Naive thymus-derived CD4-positive, alpha-beta T cell (primary cell): ENCODE measurements at regions of chr14 and their contacts with region 1.

Region 1: DNA sequence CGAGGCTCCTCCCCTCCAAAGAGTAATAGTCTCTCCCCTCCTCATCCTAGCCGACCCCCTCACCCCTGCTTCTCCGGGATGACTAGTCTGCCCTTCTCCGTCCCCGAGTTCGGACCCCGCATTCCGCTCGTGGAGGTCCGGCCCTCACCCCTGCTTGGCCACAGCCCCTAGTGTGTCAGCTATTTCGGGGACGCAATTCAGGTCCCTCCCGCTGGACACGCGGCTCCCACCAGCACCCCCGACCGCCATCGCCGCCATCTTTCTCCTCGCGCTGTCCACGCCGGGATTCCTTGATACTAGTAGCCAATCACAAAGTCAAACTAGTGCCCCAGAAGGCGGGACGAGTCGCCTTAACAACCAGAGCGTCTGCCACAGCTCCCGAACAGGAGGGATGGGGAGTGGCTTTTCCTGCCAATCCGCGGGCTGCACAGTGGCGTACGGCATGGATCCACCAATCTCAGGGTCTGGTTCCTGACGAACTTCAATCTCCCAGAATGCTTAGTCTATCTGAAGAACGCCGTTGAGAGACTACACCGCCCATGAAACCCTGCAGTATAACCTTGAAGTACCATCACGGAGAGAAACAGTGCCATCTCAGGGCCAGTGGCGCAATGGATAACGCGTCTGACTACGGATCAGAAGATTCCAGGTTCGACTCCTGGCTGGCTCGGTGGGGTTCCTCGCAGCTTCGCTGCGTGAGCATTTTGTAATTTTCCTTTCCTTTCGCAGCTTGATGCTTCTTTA is at the start of gene PRMT5:
- DNase-seq: peak; percentile 81 to 100 (median 99)
- ATAC-seq: peak; percentile 97
- H3K4me3 ChIP-seq: peak within 1 kb of the TSS; percentile 91
- H3K4me3 Mint-ChIP-seq: no peak within 1 kb of the TSS
- H3K27ac ChIP-seq: peak within 1 kb of the TSS; percentile 91
- H3K27ac Mint-ChIP-seq: no peak within 1 kb of the TSS
- H3K4me1 ChIP-seq: peaks cover 9 to 17% of the 10 kb centered on the region in 2 donors
- H3K4me1 Mint-ChIP-seq: peaks cover 5 to 36% (median 20%) of the 10 kb centered on the region in 7 donors
- H3K27me3 ChIP-seq: no peaks in the 10 kb centered on the region
- H3K27me3 Mint-ChIP-seq: no peaks in the 10 kb centered on the region
- total RNA-seq, gene PRMT5: 24.9 to 82.8 (median 34.2) TPM

Region 2: DNA sequence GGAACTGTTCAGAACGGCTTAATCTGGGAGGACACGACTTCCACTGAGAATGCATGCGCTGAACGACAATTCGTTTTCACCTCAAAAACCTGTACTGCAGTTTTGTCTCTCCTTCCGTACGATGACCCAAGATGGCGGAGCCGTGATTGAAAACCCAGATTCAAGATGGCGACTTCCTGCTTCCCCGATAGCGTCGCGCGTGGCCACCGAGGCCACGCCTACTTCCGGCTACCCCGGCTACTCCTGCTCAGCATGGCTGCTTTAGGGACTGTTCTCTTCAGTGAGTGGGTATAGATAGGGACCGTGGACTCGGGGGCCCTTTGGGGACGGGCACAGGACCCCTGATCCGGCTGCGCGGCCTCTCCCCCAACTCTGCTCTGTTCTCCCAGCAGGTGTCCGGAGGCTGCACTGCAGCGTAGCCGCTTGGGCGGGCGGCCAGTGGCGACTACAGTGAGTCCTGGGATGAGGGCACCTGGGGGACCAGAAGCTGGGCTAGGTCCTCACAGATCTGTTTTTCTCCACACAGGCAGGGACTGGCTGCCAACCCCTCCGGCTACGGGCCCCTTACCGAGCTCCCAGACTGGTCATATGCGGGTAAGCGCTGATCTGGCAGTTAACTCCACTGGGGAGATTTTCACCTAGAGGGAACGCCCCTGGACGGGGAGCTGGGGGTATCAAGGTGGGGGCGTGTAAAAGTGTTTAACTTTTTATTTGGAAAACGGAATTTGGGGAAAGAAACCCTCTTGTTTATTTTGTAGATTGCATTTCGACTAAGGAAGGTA is 99.4 kb before region 1 on chr14 and contains the start of gene MRPL52:
- CTCF ChIA-PET with region 1: no interaction called
- POLR2A ChIA-PET with region 1: interaction called, 5 read pairs
- intact Hi-C with region 1: loop called (anchors 1 kb)
- DNase-seq: peak; percentile 71 to 90 (median 88)
- ATAC-seq: peak; percentile 97
- H3K4me3 ChIP-seq: peak within 1 kb of the TSS; percentile 99
- H3K4me3 Mint-ChIP-seq: peak within 1 kb of the TSS; percentile 74 to 94 (median 91)
- H3K27ac ChIP-seq: peak within 1 kb of the TSS; percentile 95
- H3K27ac Mint-ChIP-seq: peak within 1 kb of the TSS; percentile 91 to 99 (median 97)
- H3K4me1 ChIP-seq: peaks cover 11 to 21% of the 10 kb centered on the region in 2 donors
- H3K4me1 Mint-ChIP-seq: peaks cover 11 to 39% (median 32%) of the 10 kb centered on the region in 7 donors
- H3K27me3 ChIP-seq: no peaks in the 10 kb centered on the region
- H3K27me3 Mint-ChIP-seq: peaks cover 0 to 2% (median 0%) of the 10 kb centered on the region in 5 donors
- total RNA-seq, gene MRPL52: 32.9 to 118 (median 48.2) TPM

Region 3: DNA sequence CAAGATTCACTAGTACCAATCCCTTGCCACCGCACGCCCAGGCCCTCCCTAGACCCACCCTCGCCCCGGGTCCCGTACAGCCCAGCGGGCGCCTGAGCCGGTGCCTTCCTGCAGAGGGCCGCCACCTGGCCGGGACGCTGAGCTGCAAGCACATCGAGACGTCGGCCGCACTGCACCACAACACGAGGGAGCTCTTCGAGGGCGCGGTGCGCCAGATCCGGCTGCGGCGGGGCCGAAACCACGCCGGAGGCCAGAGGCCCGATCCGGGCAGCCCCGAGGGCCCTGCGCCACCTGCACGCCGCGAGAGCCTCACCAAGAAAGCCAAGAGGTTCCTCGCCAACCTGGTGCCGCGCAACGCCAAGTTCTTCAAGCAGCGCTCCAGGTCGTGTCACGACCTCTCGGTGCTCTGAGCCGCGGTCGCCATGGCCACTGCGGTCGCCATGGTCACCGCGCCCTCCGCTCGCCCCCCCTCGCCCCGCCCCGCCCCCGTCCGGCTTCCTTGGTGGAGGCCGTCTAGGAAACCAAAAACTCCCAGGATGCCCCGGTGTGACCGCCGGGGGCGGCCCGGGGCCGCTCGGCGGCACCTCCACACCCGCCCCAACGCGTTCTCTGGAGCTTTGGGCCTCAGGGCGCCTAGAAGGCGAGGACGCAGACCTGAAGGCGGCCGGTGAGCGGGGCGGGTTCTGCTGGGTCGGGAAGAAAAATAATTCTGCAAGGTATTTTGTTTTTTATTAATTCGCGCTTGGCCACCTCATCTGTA is 42.6 kb before region 1 on chr14:
- CTCF ChIA-PET with region 1: interaction called, 5 read pairs
- POLR2A ChIA-PET with region 1: interaction called, 7 read pairs
- intact Hi-C with region 1: loop called in 1 of 2 experiments (anchors 1 kb)
- DNase-seq: peak; percentile 42 to 75 (median 69)
- ATAC-seq: peak; percentile 80
- H3K4me3 ChIP-seq: peak overlapping the region; percentile 77
- H3K4me3 Mint-ChIP-seq: peak overlapping the region; percentile 88 to 100 (median 92)
- H3K27ac ChIP-seq: peak overlapping the region; percentile 75
- H3K27ac Mint-ChIP-seq: peak overlapping the region; percentile 85 to 98 (median 96)
- H3K4me1 ChIP-seq: peaks cover 21 to 53% of the 10 kb centered on the region in 2 donors
- H3K4me1 Mint-ChIP-seq: peaks cover 39 to 80% (median 72%) of the 10 kb centered on the region in 7 donors
- H3K27me3 ChIP-seq: no peaks in the 10 kb centered on the region
- H3K27me3 Mint-ChIP-seq: peaks cover 0 to 21% (median 0%) of the 10 kb centered on the region in 5 donors

Region 4: DNA sequence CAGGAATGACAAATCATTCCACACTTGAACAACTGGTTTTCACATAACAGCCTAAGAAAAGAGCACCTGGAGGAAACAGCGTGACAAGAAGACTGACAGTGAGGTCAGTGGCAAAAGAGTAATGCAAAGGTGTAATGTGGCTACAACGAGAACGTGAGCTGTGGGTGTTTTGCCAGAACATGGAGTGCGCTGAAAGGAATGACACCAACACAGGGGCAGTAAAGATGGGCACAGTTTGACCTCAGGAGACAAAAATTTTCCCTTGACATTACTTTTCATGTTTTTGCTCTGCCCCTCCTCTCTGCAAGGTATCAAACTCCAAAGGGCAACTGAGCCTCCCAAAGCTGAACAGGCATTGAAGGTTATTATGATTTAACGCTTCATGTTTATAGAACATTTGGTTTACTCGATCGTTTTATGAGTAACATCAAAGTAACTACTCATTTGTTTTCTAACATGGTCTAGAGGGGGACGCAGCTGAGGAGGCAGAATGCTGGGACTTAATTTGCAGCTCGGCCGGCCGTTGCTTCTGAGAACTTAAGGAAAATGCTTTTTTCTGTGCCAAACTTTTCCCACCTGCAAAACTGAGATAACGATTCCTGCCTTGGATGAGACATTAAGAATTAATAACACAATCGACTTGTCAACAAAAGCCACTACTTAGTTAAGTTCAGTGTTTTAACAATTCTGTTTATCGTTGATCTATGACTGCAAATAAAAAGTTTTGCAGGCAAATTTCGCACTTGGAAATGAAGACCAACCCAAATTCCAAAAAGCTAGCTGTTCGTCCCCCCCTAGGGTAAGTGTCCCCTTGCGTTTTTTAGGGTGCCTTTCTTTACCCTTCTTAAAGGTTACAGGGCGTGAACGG is 26.7 kb after region 1 on chr14:
- CTCF ChIA-PET with region 1: interaction called, 8 read pairs
- POLR2A ChIA-PET with region 1: interaction called, 11 read pairs
- intact Hi-C with region 1: loop called (anchors 1 kb)
- DNase-seq: no peak
- ATAC-seq: no peak
- H3K4me3 ChIP-seq: peak overlapping the region; percentile 64
- H3K4me3 Mint-ChIP-seq: peak overlapping the region; percentile 87 to 95 (median 93)
- H3K27ac ChIP-seq: peak overlapping the region; percentile 85
- H3K27ac Mint-ChIP-seq: peak overlapping the region; percentile 88 to 96 (median 92)
- H3K4me1 ChIP-seq: peaks cover 0 to 6% of the 10 kb centered on the region in 2 donors
- H3K4me1 Mint-ChIP-seq: peaks cover 0 to 31% (median 19%) of the 10 kb centered on the region in 7 donors
- H3K27me3 ChIP-seq: no peaks in the 10 kb centered on the region
- H3K27me3 Mint-ChIP-seq: peaks cover 0 to 4% (median 0%) of the 10 kb centered on the region in 5 donors

Region 5: GRCh38 chr14:23034483-23035302 is 105.4 kb after region 1 on chr14 and contains the start of gene PSMB5:
- CTCF ChIA-PET with region 1: no interaction called
- POLR2A ChIA-PET with region 1: interaction called, 4 read pairs
- intact Hi-C with region 1: loop called (anchors 1 kb)
- DNase-seq: peak; percentile 63 to 94 (median 91)
- ATAC-seq: peak; percentile 95
- H3K4me3 ChIP-seq: peak within 1 kb of the TSS; percentile 79
- H3K4me3 Mint-ChIP-seq: peak within 1 kb of the TSS; percentile 87 to 96 (median 92)
- H3K27ac ChIP-seq: peak within 1 kb of the TSS; percentile 83
- H3K27ac Mint-ChIP-seq: peak within 1 kb of the TSS; percentile 93 to 99 (median 96)
- H3K4me1 ChIP-seq: peaks cover 9 to 17% of the 10 kb centered on the region in 2 donors
- H3K4me1 Mint-ChIP-seq: peaks cover 22 to 43% (median 29%) of the 10 kb centered on the region in 7 donors
- H3K27me3 ChIP-seq: no peaks in the 10 kb centered on the region
- H3K27me3 Mint-ChIP-seq: no peaks in the 10 kb centered on the region
- total RNA-seq, gene PSMB5: 19.2 to 69.1 (median 32.8) TPM